GM12878 (cell line): ENCODE measurements at regions of chr4 and their contacts with region 1.

Region 1: GRCh38 chr4:52983563-52984303 is 121.6 kb downstream of the RASL11B start:
- DNase-seq: no peak
- ATAC-seq: peak; percentile 94
- H3K4me3 ChIP-seq: no peak overlapping the region
- H3K27ac ChIP-seq: no peak overlapping the region
- H3K4me1 ChIP-seq: no peaks in the 10 kb centered on the region
- H3K27me3 ChIP-seq: no peaks in the 10 kb centered on the region
- CTCF ChIP-seq: peak; percentile 42 to 63 (median 47); a peak in 5 of 6 replicates
- EP300 ChIP-seq: no peak
- POLR2A ChIP-seq: no peak
- RAD21 ChIP-seq: peak; percentile 80

Region 2: GRCh38 chr4:52376132-52376704 is 607.5 kb before region 1 on chr4:
- CTCF ChIA-PET with region 1: interaction called, 32 read pairs
- POLR2A ChIA-PET with region 1: no interaction called
- RAD21 ChIA-PET with region 1: interaction called, 8 read pairs
- SMC1A ChIA-PET with region 1: interaction called, 11 read pairs
- in situ Hi-C with region 1: loop called (anchors 5 kb)
- intact Hi-C with region 1: loop called (anchors 1 kb)
- DNase-seq: no peak
- ATAC-seq: peak; percentile 24; the same call in 1 of the 3 replicates
- H3K4me3 ChIP-seq: no peak overlapping the region
- H3K27ac ChIP-seq: no peak overlapping the region
- H3K4me1 ChIP-seq: no peaks in the 10 kb centered on the region
- H3K27me3 ChIP-seq: no peaks in the 10 kb centered on the region
- CTCF ChIP-seq: peak; percentile 20 to 53 (median 41); a peak in 4 of 6 replicates
- EP300 ChIP-seq: no peak
- POLR2A ChIP-seq: no peak
- RAD21 ChIP-seq: peak; percentile 68

Region 3: GRCh38 chr4:52545099-52546069 is 438.3 kb before region 1 on chr4:
- CTCF ChIA-PET with region 1: interaction called, 91 read pairs
- POLR2A ChIA-PET with region 1: no interaction called
- RAD21 ChIA-PET with region 1: interaction called, 30 read pairs
- SMC1A ChIA-PET with region 1: interaction called, 20 read pairs
- in situ Hi-C with region 1: loop called (anchors 5 kb)
- intact Hi-C with region 1: loop called (anchors 2 kb)
- DNase-seq: peak; percentile 7
- ATAC-seq: peak; percentile 91
- H3K4me3 ChIP-seq: no peak overlapping the region
- H3K27ac ChIP-seq: no peak overlapping the region
- H3K4me1 ChIP-seq: no peaks in the 10 kb centered on the region
- H3K27me3 ChIP-seq: no peaks in the 10 kb centered on the region
- CTCF ChIP-seq: peak; percentile 93 to 96 (median 95)
- EP300 ChIP-seq: no peak
- POLR2A ChIP-seq: no peak
- RAD21 ChIP-seq: peak; percentile 93

Region 4: DNA sequence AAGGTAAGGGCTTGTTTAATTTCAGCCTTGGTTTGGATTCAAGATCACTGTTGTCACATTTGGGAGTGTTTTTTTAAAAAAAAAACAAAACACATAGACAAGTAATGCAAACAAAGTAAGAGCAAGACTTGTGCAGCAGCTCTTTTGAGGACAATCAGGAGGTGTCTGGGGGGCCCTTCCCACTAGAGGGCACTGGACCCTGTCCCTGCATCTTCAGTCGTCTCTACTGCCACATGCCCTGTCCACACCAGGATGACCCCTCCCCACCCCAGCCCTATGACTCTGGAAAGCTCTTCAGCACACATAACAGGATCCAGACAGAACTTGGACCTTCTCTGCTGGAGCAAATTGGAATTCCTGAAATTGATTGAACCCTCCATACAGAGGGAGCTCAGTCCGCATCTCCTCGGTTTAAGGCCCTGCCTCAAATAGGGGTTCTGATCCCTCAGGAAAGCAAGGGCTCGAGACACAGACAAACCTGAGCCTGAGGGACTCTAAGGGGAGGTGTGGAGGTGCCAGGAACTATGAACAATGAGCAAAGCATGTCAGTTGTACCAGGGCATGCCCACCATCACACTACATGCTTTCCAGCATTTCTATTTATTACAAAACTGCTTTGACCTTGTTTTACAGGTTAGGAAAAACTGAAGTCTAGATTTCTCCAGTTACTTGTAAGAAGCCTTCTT is 395.5 kb before region 1 on chr4:
- CTCF ChIA-PET with region 1: interaction called, 20 read pairs
- POLR2A ChIA-PET with region 1: no interaction called
- RAD21 ChIA-PET with region 1: interaction called, 8 read pairs
- SMC1A ChIA-PET with region 1: interaction called, 4 read pairs
- in situ Hi-C with region 1: no loop called
- intact Hi-C with region 1: loop called (anchors 5 kb)
- DNase-seq: no peak
- ATAC-seq: peak; percentile 92
- H3K4me3 ChIP-seq: no peak overlapping the region
- H3K27ac ChIP-seq: no peak overlapping the region
- H3K4me1 ChIP-seq: no peaks in the 10 kb centered on the region
- H3K27me3 ChIP-seq: no peaks in the 10 kb centered on the region
- CTCF ChIP-seq: peak; percentile 54 to 69 (median 56)
- EP300 ChIP-seq: no peak
- POLR2A ChIP-seq: no peak
- RAD21 ChIP-seq: peak; percentile 68

Region 5: DNA sequence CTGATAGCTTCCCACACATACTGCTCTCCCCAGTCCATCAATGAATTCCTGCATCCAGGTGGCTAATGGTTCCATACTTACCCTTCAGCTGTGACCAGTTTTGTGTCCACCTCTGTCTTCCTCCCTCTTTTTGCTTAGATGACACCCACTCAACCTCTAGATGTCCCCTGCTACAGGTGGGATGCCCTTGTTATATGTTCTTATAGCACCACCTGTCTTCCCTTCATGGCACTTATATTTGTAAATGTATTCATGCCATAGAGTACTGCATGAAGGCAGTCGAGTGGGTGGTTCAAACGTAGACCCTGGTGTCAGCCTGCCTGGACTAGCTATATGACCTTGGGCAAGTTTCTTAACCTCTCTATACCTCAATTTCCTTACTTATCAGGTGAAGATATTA is 318.1 kb before region 1 on chr4:
- CTCF ChIA-PET with region 1: interaction called, 3 read pairs
- POLR2A ChIA-PET with region 1: no interaction called
- RAD21 ChIA-PET with region 1: interaction called, 4 read pairs
- SMC1A ChIA-PET with region 1: interaction called, 4 read pairs
- in situ Hi-C with region 1: no loop called
- intact Hi-C with region 1: loop called (anchors 2 kb)
- DNase-seq: no peak
- ATAC-seq: peak; percentile 94
- H3K4me3 ChIP-seq: no peak overlapping the region
- H3K27ac ChIP-seq: no peak overlapping the region
- H3K4me1 ChIP-seq: 0 out of 2 replicates have a peak, but pooled peaks cover 2% of the 10 kb centered on the region
- H3K27me3 ChIP-seq: no peaks in the 10 kb centered on the region
- CTCF ChIP-seq: peak; percentile 50 to 76 (median 52); a peak in 5 of 6 replicates
- EP300 ChIP-seq: no peak
- POLR2A ChIP-seq: no peak
- RAD21 ChIP-seq: peak; percentile 87

Region 6: GRCh38 chr4:52721968-52722815 is 261.5 kb before region 1 on chr4:
- CTCF ChIA-PET with region 1: interaction called, 3 read pairs
- POLR2A ChIA-PET with region 1: no interaction called
- RAD21 ChIA-PET with region 1: no interaction called
- SMC1A ChIA-PET with region 1: no interaction called
- in situ Hi-C with region 1: no loop called
- intact Hi-C with region 1: loop called (anchors 10 kb)
- DNase-seq: peak; percentile 92
- ATAC-seq: peak; percentile 98
- H3K4me3 ChIP-seq: peak overlapping the region; percentile 76
- H3K27ac ChIP-seq: peak overlapping the region; percentile 83
- H3K4me1 ChIP-seq: no peaks in the 10 kb centered on the region
- H3K27me3 ChIP-seq: no peaks in the 10 kb centered on the region
- CTCF ChIP-seq: no peak
- EP300 ChIP-seq: 0 out of 4 replicates have a peak, but pooled peaks of 1 of the 2 experiments have one; percentile 30
- POLR2A ChIP-seq: peak; percentile 95
- RAD21 ChIP-seq: no peak

Region 7: DNA sequence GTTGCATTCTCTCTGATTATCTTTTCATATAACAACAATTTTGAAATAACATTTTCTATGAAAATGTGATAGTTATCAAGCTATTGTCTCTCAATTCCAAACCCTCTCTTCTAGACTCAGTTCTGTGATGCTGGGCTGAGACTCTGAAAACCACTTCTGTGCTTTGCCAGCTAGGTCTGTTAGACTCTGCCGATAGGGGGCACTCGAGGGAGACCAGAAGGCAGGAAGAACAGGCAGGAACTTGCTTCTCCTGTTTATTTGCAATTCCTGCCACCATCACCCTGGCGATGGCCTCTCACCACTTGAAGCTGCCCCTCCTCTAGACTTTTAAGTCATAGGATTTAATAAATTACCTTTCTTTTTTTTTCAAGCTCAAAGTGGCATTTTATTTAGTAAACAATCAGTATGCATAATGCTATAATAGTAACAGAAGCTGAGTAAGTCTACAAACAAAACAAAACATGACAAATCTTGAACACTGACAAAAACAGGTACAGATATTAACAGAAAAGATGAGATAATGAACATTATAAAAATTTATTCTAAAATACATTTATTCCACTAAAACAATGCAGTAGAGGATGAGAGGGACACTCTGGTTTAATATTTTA is 71.9 kb before region 1 on chr4:
- CTCF ChIA-PET with region 1: interaction called, 5 read pairs
- POLR2A ChIA-PET with region 1: no interaction called
- RAD21 ChIA-PET with region 1: interaction called, 5 read pairs
- SMC1A ChIA-PET with region 1: interaction called, 8 read pairs
- in situ Hi-C with region 1: no loop called
- intact Hi-C with region 1: loop called (anchors 2 kb)
- DNase-seq: peak; percentile 9
- ATAC-seq: peak; percentile 96
- H3K4me3 ChIP-seq: no peak overlapping the region
- H3K27ac ChIP-seq: no peak overlapping the region
- H3K4me1 ChIP-seq: no peaks in the 10 kb centered on the region
- H3K27me3 ChIP-seq: no peaks in the 10 kb centered on the region
- CTCF ChIP-seq: peak; percentile 68 to 94 (median 92)
- EP300 ChIP-seq: no peak
- POLR2A ChIP-seq: no peak
- RAD21 ChIP-seq: peak; percentile 51

Region 8: DNA sequence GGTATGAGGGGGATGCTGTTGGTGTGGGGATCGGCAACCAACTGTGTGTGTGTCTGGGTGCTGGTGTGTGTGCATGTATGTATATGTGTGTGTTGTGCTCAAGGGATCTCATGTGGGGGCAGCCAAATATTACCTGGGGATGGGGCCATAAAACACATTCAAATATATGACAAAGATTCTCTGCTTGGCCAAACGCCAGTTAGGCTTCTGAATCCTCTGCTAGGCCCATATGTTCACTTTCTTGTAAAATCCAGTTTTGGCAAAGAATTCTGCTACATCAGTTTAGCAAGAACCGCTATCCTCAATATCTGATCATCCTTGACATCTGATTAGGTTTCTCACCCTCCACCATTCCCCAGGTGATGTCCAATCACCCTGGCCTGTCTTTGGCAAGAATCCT is 15.0 kb before region 1 on chr4:
- CTCF ChIA-PET with region 1: no interaction called
- POLR2A ChIA-PET with region 1: no interaction called
- RAD21 ChIA-PET with region 1: no interaction called
- SMC1A ChIA-PET with region 1: no interaction called
- in situ Hi-C with region 1: no loop called
- intact Hi-C with region 1: no loop called
- DNase-seq: no peak
- ATAC-seq: no peak
- H3K4me3 ChIP-seq: no peak overlapping the region
- H3K27ac ChIP-seq: no peak overlapping the region
- H3K4me1 ChIP-seq: no peaks in the 10 kb centered on the region
- H3K27me3 ChIP-seq: no peaks in the 10 kb centered on the region
- CTCF ChIP-seq: no peak
- EP300 ChIP-seq: no peak
- POLR2A ChIP-seq: no peak
- RAD21 ChIP-seq: no peak